SK-N-SH (cell line): ENCODE measurements at regions of chr20 and their contacts with region 1.

Region 1: GRCh38 chr20:41900201-41900691 is 282.1 kb upstream of the CHD6 start:
- DNase-seq: no peak
- H3K4me3 ChIP-seq: no peak overlapping the region
- H3K27ac ChIP-seq: no peak overlapping the region
- H3K4me1 ChIP-seq: peaks cover 0 to 4% of the 10 kb centered on the region in 2 experiments; a peak in 1 of 4 replicates
- H3K27me3 ChIP-seq: no peaks in the 10 kb centered on the region
- CTCF ChIP-seq: no peak
- EP300 ChIP-seq: no peak
- RAD21 ChIP-seq: no peak

Region 2: DNA sequence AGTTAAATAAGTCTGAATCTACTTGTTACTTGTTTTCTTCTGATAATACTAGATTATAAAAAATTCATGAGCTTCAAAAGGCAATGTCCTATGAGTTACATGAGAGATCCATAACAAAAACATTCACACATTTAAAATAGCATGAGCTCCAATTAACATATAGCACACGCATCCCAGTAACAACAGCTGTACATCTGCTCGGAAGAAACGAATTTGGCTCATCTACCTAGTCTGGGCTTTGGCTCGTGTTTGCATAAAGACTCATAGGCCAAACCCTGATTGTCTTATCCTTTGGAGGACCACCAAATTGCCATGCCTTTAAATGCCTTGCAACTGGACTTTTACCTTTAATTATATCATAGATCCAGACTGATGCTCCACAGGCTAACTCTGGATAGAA is 22.3 kb before region 1 on chr20:
- CTCF ChIA-PET with region 1: no interaction called
- POLR2A ChIA-PET with region 1: no interaction called
- DNase-seq: no peak
- H3K4me3 ChIP-seq: no peak overlapping the region
- H3K27ac ChIP-seq: no peak overlapping the region
- H3K4me1 ChIP-seq: no peaks in the 10 kb centered on the region
- H3K27me3 ChIP-seq: no peaks in the 10 kb centered on the region
- CTCF ChIP-seq: no peak
- EP300 ChIP-seq: no peak
- RAD21 ChIP-seq: no peak

Region 3: DNA sequence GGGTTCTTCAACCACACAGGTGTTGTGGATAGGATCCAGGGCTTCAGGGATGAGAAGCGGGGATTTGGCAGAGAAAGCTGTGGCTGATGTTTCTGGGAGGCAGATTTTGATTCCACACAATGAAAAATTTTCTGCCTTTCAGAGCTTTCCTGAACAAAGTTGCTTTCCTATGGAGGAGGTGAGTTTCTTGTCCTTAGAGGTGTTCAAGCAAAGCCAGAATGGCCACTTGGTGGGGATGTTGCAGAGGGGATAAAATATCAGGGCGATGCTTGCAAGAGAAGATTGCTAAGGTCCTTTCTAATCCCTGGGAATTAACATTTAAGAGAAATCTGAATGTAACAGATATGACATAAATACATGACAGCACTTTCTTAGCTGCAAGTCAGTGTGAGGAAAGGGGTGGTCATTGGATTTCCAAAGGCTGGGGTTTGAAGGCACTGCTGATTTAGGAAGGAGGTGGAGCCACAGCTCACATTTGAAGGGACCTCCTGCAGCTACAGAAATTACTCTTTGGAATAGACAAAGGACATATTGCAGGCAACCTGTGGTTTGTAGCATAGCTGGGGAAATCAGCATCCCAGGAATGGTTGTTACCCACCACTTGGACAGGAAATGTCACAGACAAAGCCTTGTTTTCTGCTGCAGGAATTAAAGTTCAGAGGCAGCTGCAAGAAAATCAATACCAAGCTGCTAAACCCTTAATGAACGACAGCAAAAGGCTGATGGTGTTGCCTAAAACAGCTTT is 10.9 kb before region 1 on chr20:
- CTCF ChIA-PET with region 1: interaction called, 13 read pairs
- POLR2A ChIA-PET with region 1: no interaction called
- DNase-seq: peak; percentile 47
- H3K4me3 ChIP-seq: no peak overlapping the region
- H3K27ac ChIP-seq: no peak overlapping the region
- H3K4me1 ChIP-seq: no peaks in the 10 kb centered on the region
- H3K27me3 ChIP-seq: no peaks in the 10 kb centered on the region
- CTCF ChIP-seq: no peak
- EP300 ChIP-seq: no peak
- RAD21 ChIP-seq: peak; percentile 77

Region 4: GRCh38 chr20:42110301-42110700 is 210.1 kb after region 1 on chr20:
- CTCF ChIA-PET with region 1: no interaction called
- POLR2A ChIA-PET with region 1: no interaction called
- DNase-seq: no peak
- H3K4me3 ChIP-seq: no peak overlapping the region
- H3K27ac ChIP-seq: no peak overlapping the region
- H3K4me1 ChIP-seq: peaks cover 0 to 8% of the 10 kb centered on the region in 2 experiments; a peak in 1 of 4 replicates
- H3K27me3 ChIP-seq: no peaks in the 10 kb centered on the region
- CTCF ChIP-seq: no peak
- EP300 ChIP-seq: no peak
- RAD21 ChIP-seq: no peak

Region 5: DNA sequence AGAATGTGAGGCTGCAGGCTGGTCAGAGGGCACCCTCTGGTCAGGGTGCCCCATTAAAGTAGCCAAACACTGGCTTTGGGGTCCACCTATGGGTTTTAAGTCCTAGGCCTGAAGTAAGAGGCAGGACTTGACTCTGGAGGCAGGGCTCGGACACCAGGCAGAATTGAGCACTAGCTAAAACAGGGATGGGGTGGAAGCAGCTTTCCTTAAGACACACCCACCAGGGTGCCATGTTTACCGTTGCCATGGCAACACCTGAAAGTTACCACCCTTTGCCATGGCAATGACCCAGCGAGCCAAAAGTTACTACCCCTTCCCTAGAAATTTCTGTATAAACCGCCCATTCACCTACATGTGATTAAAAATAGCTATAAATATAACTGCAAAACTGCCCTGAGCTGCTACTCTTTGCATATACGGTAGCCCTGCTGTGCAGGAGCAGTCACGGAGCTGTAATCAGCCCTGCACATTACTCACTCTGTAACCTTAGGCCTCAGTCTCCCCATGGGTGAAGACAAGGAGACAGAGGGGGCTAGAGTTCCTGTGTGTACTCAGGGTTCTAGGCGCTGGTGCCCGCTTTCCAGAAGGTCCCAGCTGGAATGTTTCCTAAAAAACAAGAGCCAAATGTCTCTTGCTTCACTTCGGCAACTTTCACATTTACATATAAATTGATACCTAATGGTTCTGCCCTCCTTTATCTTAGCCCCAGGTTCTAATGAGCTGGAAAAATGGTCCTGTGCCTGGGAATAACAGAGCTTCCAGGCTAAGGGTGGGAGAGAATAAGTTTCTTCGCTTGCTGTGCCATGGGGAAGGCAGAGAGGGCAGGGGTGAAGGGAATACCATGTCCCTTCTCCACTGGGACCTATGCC is 1530.3 kb after region 1 on chr20:
- CTCF ChIA-PET with region 1: no interaction called
- POLR2A ChIA-PET with region 1: no interaction called
- DNase-seq: no peak
- H3K4me3 ChIP-seq: no peak overlapping the region
- H3K27ac ChIP-seq: peak overlapping the region in 1 of 2 experiments; percentile 77; a peak in 2 of 4 replicates
- H3K4me1 ChIP-seq: peaks cover 0 to 14% of the 10 kb centered on the region in 2 experiments; a peak in 1 of 4 replicates
- H3K27me3 ChIP-seq: no peaks in the 10 kb centered on the region
- CTCF ChIP-seq: no peak
- EP300 ChIP-seq: no peak
- RAD21 ChIP-seq: no peak